ENCODE measurements at regions of chr1 and their contacts with region 1.

Region 1: GRCh38 chr1:85259912-85260274 is 431 bp upstream of the C1orf52 start:
- DNase-seq: no peak
- H3K4me3 ChIP-seq: peak overlapping the region; percentile 87 to 98
- H3K27ac ChIP-seq: peak overlapping the region in 1 of 2 donors; percentile 71
- H3K4me1 ChIP-seq: peaks cover 4% of the 10 kb centered on the region
- H3K27me3 ChIP-seq: no peaks in the 10 kb centered on the region
- CTCF ChIP-seq: no peak
- POLR2A ChIP-seq: no peak

Region 2: GRCh38 chr1:84944767-84945486 is 315.0 kb before region 1 on chr1:
- intact Hi-C with region 1: loop called (anchors 10 kb)
- DNase-seq: peak; percentile 75
- H3K4me3 ChIP-seq: peak overlapping the region; percentile 6 to 16
- H3K27ac ChIP-seq: peak overlapping the region in 1 of 2 donors; percentile 36
- H3K4me1 ChIP-seq: no peaks in the 10 kb centered on the region
- H3K27me3 ChIP-seq: no peaks in the 10 kb centered on the region
- CTCF ChIP-seq: peak; percentile 67 to 85 (median 79)
- POLR2A ChIP-seq: no peak

Region 3: DNA sequence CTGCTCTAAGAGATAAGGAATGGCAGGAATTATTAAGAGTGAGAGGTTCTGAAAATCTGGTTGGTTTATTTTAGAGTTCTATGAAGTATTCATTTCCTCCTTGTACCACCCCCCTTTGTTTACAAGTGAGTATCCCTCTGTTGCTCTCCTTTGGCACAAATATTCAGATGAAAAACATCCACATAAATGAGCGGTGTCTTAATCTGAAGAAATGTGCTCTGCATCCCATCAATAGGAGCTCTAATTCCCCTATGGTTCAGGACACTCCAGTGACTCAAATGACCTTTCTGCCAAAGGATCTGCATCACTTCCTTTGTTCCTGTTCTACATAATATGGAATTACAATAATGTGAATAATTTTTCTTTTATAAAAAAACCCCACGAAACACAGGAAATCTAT is 188.5 kb after region 1 on chr1:
- intact Hi-C with region 1: no loop called
- DNase-seq: no peak
- H3K4me3 ChIP-seq: no peak overlapping the region
- H3K27ac ChIP-seq: no peak overlapping the region
- H3K4me1 ChIP-seq: peaks cover 23% of the 10 kb centered on the region
- H3K27me3 ChIP-seq: no peaks in the 10 kb centered on the region
- CTCF ChIP-seq: no peak
- POLR2A ChIP-seq: no peak

Measured in testis (tissue), 5 donors.